Mammary epithelial cell (primary cell): ENCODE measurements at regions of chr13 and their contacts with region 1.

Region 1: DNA sequence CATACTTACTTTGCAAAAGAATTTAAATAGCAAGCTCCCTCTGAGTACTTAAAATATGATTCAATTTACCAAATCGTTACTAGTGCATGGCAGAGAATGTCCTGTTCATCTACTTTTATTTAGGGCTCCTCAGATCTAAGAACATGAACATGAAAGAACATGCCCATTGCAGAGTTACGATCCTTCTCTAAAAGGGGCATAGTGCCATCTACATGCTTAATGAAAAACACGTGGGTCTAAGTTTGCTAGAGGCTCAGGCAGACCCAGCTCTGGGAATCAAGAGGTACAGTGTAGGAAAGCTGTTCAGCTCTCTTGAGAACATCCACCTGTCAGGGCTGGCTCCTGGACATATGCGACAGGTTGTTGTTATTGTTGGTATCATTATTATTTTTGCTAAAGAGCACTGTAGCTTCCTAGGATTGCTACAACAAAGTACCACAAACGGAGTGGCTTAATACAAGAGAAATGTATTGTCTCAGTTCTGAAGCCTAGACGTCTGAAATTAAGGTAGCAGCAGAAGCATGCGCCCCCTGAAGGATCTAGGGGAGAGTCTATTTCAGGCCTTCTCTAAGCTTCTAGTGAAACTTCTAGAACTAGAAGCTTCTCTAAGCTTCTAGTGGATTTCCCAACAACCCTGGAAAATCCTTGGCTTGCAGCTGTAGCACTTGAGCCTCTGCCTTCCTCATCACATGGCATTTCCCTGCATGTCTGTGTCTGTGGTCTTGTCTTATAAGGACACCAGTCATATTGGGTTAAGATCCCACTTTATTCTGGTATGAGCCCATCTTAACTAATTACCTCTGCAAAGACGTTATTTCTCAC is 133.9 kb downstream of the DCT start:
- DNase-seq: peak; percentile 77
- H3K4me3 ChIP-seq: no peak overlapping the region
- H3K27ac ChIP-seq: no peak overlapping the region
- H3K4me1 ChIP-seq: no peaks in the 10 kb centered on the region
- H3K27me3 ChIP-seq: no peaks in the 10 kb centered on the region
- CTCF ChIP-seq: peak; percentile 46 to 61

Region 2: GRCh38 chr13:92716749-92717148 is 1628.8 kb before region 1 on chr13:
- CTCF ChIA-PET with region 1: no interaction called
- dilution Hi-C with region 1: no loop called
- in situ Hi-C with region 1: loop called in 1 of 2 experiments (anchors 25 kb)
- intact Hi-C with region 1: loop called (anchors 5 kb)
- DNase-seq: peak; percentile 2
- H3K4me3 ChIP-seq: no peak overlapping the region
- H3K27ac ChIP-seq: no peak overlapping the region
- H3K4me1 ChIP-seq: no peaks in the 10 kb centered on the region
- H3K27me3 ChIP-seq: no peaks in the 10 kb centered on the region
- CTCF ChIP-seq: peak; percentile 24 to 34

Region 3: DNA sequence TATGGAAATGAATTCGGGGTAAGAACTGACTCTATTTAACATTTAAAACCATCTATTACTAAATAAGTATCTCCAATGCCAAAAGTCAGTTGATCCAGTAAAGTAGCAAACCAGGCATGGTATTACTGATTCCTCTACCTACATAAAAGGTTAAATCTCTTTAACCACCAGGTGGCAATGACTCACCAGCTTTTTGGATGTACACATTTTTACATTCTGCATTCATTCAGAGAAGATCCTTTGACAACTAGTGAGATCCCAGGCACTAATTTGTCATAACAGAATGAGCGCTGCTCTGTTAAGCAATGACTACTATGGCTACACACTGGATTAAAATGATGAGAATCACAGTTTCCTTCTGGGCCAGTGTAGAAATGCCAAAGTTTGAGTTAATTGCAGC is 1448.7 kb before region 1 on chr13:
- CTCF ChIA-PET with region 1: no interaction called
- dilution Hi-C with region 1: no loop called
- in situ Hi-C with region 1: no loop called
- intact Hi-C with region 1: loop called (anchors 2 kb)
- DNase-seq: peak; percentile 58
- H3K4me3 ChIP-seq: no peak overlapping the region
- H3K27ac ChIP-seq: no peak overlapping the region
- H3K4me1 ChIP-seq: no peaks in the 10 kb centered on the region
- H3K27me3 ChIP-seq: peaks cover 4% of the 10 kb centered on the region
- CTCF ChIP-seq: peak; percentile 39 to 43

Region 4: DNA sequence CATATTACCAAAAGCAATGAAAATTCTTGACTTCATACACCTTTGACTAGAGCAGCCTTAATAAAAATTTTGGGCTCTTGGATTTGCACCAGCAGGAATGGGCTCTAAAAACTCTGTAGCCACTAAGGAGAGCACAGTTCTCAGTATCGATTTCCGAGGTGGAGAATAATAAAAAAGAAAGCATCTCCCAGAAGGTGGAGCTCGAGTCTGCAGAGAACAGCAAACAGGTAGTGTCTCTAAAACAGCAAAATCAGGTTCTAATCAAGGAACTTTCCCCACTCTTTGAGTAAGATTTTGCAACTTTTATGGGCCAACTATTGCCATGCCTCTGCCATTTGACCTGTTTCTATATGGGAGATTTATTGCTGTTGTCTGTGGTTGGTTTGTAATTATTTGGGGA is 1377.7 kb before region 1 on chr13:
- CTCF ChIA-PET with region 1: no interaction called
- dilution Hi-C with region 1: no loop called
- in situ Hi-C with region 1: no loop called
- intact Hi-C with region 1: loop called (anchors 1 kb)
- DNase-seq: peak; percentile 9
- H3K4me3 ChIP-seq: no peak overlapping the region
- H3K27ac ChIP-seq: no peak overlapping the region
- H3K4me1 ChIP-seq: no peaks in the 10 kb centered on the region
- H3K27me3 ChIP-seq: no peaks in the 10 kb centered on the region
- CTCF ChIP-seq: peak; percentile 21 to 56

Region 5: GRCh38 chr13:93248627-93249047 is 1096.9 kb before region 1 on chr13:
- CTCF ChIA-PET with region 1: no interaction called
- dilution Hi-C with region 1: no loop called
- in situ Hi-C with region 1: loop called in 1 of 2 experiments (anchors 25 kb)
- intact Hi-C with region 1: loop called (anchors 5 kb)
- DNase-seq: no peak
- H3K4me3 ChIP-seq: no peak overlapping the region
- H3K27ac ChIP-seq: peak overlapping the region; percentile 80
- H3K4me1 ChIP-seq: peaks cover 30% of the 10 kb centered on the region
- H3K27me3 ChIP-seq: no peaks in the 10 kb centered on the region
- CTCF ChIP-seq: peak in 1 of 2 donors; percentile 12

Region 6: DNA sequence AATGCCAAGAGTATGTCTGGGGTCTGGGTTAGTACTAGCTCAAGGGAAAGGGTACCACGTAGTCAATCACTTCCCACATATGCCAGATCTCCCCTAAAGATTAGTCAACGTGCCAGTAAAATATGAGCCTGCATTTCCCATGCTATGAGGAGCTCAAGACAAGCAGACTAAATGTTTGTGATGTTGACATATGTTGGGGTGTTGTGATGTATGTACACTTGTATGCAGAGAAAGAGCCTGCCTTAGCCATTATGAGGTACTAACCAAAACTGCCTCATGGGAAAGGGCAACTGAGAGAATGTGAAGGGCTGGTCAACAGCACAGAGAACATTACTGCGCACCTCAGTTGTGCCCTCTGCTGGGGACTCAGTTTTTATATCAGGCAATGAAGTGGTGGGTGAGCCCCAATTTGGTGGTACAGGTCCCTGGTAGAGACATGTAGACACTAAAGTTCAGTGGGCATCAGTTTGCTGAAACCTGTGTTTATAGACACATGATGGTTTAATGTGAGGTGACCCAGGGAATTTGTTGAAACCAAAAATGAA is 153.1 kb before region 1 on chr13:
- CTCF ChIA-PET with region 1: no interaction called
- dilution Hi-C with region 1: no loop called
- in situ Hi-C with region 1: no loop called
- intact Hi-C with region 1: loop called (anchors 10 kb)
- DNase-seq: peak; percentile 12
- H3K4me3 ChIP-seq: no peak overlapping the region
- H3K27ac ChIP-seq: no peak overlapping the region
- H3K4me1 ChIP-seq: peaks cover 14% of the 10 kb centered on the region
- H3K27me3 ChIP-seq: no peaks in the 10 kb centered on the region
- CTCF ChIP-seq: peak; percentile 22 to 53

Region 7: DNA sequence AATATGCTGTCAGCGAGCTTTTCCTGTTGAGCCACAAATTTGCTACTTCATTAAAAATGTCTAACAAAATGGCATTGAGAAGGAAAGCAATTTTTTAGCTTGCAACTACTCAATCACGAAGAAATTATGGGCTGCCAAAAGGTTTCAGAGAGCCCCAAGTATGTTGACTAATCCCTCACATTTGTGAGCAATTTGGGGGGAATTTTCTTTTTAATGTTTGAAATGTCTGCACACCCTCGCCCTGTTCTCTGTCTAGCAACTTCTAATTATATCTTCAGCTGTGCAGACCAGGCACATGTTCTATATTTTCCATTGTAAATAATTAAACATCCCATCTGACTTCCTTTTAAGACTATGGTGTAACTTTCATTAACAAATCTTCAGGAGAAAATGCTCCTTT is 59.0 kb before region 1 on chr13:
- CTCF ChIA-PET with region 1: no interaction called
- dilution Hi-C with region 1: no loop called
- in situ Hi-C with region 1: no loop called
- intact Hi-C with region 1: no loop called
- DNase-seq: no peak
- H3K4me3 ChIP-seq: no peak overlapping the region
- H3K27ac ChIP-seq: no peak overlapping the region
- H3K4me1 ChIP-seq: no peaks in the 10 kb centered on the region
- H3K27me3 ChIP-seq: no peaks in the 10 kb centered on the region
- CTCF ChIP-seq: no peak